HEK293 (cell line): ENCODE measurements at regions of chr3 and their contacts with region 1.

Region 1: DNA sequence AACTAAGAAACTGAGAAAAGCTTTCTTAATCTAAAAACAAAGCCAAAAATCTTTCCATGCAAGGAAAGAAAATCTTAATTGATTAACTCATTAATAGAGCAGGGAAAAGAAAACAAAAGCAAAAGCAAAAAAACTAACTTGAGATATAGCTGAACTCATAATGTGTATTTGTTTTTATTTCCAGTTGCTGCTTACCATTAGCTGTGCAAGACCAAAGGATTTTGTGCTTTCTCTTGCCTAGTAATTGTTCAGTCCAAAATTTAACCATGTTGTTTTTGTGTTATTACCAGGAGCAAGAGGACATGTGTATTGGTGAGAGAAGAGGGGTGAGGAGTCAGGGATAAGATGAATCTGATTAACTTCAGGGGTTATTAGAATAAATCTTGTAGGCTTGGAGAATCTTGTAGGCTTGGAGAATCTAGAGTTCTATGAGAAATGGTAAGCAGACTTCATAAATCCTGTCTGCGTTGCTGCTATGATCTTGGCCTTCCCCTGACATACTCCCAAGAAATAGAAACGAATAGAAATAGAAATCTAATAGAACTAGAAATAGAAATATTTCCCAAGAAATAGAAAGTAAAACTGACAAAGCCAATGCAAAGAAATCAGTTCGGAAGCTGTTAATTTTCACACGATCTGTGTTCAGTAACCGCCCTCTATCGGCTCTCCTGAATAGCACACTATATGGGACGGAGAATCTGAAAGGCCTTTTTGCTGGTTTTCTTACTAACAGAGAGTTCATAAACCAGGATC is 72.6 kb upstream of the TNFSF10 start:
- H3K4me3 ChIP-seq: no peak overlapping the region
- H3K27ac ChIP-seq: no peak overlapping the region
- H3K4me1 ChIP-seq: no peaks in the 10 kb centered on the region
- CTCF ChIP-seq: 0 out of 2 replicates have a peak, but pooled peaks have one; percentile 17

Region 2: DNA sequence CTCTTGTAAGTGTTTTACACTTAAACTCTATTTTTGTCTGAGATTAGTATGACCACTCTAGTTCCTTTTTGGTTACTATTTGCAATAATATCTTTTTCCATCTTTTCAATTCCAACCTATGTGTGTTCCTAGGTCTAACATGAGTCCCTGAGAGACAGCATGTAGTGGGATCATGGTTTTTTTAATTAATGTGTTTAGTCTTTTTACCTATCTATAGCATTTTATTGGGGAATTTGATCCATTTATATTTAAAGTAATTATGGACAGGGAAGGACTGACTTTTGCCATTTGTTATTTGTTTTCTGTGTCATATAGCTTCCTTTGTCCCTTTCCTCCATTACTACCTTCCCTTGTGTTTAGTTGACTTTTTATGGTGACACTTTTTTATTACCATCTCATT is 94.3 kb before region 1 on chr3:
- CTCF ChIA-PET with region 1: interaction called, 15 read pairs
- POLR2A ChIA-PET with region 1: no interaction called
- H3K4me3 ChIP-seq: no peak overlapping the region
- H3K27ac ChIP-seq: no peak overlapping the region
- H3K4me1 ChIP-seq: no peaks in the 10 kb centered on the region
- CTCF ChIP-seq: no peak

Region 3: DNA sequence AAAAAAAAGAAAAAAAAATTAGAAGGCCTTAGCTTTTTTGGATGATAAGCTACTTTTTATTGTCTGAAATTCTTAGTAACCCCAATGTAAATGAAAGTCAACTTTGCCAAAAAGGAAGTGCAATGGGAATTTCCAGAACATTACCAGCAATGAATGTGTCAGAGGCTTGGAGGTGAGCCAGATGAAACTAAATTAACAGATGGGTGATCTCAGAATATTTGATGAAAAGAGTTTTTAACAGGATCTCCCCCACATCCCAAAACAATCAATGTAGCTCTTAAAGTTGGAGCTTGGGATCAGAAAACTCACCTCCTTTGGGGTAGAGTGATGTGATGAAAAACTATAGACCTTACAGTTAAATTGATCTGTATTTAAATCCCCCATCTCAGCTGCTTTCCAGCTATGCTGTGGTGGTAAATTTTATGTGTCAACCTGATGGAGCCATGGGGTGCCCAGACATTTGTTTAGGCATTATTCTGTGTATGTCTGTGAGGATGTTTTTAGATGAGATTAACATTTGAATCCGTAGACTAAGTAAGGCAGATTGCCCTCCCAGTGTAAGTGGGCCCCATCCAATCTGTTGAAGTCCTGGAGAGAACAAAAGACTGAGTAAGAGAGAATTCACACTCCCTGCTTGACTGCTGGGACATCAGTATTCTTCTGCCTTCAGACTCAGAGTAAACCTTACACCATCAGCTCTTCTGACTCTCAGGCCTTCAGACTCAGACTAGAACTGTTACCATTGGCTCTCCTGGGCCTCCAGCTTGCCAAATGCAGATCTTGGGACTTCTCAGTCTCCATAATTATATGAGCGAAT is 11.7 kb after region 1 on chr3:
- CTCF ChIA-PET with region 1: interaction called, 13 read pairs
- POLR2A ChIA-PET with region 1: no interaction called
- H3K4me3 ChIP-seq: no peak overlapping the region
- H3K27ac ChIP-seq: no peak overlapping the region
- H3K4me1 ChIP-seq: no peaks in the 10 kb centered on the region
- CTCF ChIP-seq: no peak

Region 4: DNA sequence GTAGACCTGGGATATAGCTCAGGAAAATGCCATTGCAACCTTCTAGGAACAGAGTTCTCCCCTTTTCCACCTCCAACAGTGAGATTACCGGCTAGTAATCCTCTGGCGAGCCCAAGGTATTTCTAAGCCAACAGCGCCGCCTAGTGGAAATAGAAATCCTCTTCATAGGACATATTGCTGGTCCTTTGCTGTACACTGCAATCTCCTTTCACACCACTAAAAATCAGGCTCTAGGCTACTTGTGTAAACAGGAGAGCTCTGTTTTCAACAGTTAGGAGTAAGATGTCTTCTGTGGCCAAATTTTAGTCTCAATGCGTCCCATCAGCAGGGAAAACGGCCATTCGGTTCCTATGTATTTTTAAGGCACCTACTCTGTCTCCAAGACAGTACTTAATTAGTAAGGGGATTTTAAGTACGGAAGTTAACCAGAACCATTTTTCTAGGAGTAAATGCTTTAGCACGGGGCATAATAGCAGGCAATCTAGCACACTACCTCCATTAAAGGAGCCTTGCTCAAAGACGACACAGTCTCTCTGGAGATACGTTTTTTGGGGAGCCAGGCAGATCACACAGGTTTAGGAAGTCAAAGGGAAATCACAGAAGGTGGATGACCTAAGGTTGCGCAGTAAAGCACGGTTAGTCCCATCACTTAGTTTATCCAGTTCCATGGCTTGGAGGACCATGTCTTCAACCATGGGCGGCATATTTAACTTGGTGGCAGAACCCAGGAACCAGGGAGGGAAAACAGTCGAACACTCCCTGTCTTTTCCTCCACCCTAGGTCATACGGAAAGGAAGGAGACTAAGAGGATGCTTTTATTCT is 71.3 kb after region 1 on chr3:
- CTCF ChIA-PET with region 1: interaction called, 16 read pairs
- POLR2A ChIA-PET with region 1: no interaction called
- H3K4me3 ChIP-seq: no peak overlapping the region
- H3K27ac ChIP-seq: no peak overlapping the region
- H3K4me1 ChIP-seq: no peaks in the 10 kb centered on the region
- CTCF ChIP-seq: peak; percentile 64; the same call in 1 of the 2 replicates

Region 5: GRCh38 chr3:173135059-173135458 is 539.2 kb after region 1 on chr3:
- CTCF ChIA-PET with region 1: no interaction called
- POLR2A ChIA-PET with region 1: no interaction called
- H3K4me3 ChIP-seq: no peak overlapping the region
- H3K27ac ChIP-seq: no peak overlapping the region
- H3K4me1 ChIP-seq: no peaks in the 10 kb centered on the region
- CTCF ChIP-seq: no peak